MCF 10A (cell line): ENCODE measurements at regions of chr1 and their contacts with region 1.

Region 1: DNA sequence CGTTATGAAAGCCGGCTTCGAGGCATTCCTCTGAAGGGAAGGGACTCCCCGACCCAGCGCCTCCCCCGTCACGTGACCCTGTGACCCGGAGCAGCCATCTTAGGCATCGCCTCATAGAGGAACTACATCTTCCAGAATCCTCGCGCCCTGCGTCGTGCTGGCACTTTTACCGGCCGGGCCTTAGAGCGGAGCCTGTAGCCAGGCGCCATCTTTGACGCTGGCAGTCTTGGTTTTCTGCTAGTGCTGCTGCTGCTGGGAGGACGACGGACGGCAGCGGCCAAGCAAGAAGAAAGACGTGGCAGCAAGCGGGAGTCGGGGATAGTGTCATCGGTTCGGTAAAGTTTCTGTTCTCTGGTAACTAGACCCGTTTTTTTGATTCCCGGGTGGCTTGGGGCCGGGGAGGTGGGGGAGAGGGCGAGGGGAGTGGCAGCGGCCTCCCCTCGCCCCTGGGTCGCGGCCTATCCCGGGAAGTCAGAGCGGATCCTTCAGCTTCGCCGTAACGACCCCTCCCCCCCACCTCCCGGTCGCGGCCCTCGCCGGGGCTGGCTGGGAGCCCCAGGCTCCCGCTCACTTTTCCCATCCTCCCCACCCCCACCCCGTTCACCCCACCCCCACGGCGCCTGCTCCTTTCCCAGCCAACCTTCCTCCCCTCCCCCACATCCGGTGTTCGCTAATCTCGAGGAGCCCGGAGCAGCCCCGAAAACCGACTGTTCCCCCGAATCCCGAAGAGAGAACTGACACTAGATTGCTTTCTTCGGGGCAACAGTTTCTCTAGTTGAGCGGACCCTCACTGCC is at the starts of genes ZBED6 and ZC3H11A:
- DNase-seq: peak; percentile 100
- H3K4me3 Mint-ChIP-seq: peak within 1 kb of the TSS; percentile 86
- H3K27ac Mint-ChIP-seq: peak within 1 kb of the TSS; percentile 98
- H3K4me1 Mint-ChIP-seq: peaks cover 44% of the 10 kb centered on the region
- H3K27me3 Mint-ChIP-seq: no peaks in the 10 kb centered on the region
- CTCF ChIP-seq: no peak
- total RNA-seq, gene ZBED6: 68.2 and 69.8 TPM in 2 replicates
- total RNA-seq, gene ZC3H11A: 148 and 156 TPM in 2 replicates

Region 2: GRCh38 chr1:203663294-203663693 is 132.3 kb before region 1 on chr1:
- CTCF ChIA-PET with region 1: no interaction called
- POLR2A ChIA-PET with region 1: no interaction called
- intact Hi-C with region 1: loop called (anchors 1 kb)
- DNase-seq: peak; percentile 98
- H3K4me3 Mint-ChIP-seq: peak overlapping the region; percentile 3
- H3K27ac Mint-ChIP-seq: peak overlapping the region; percentile 58
- H3K4me1 Mint-ChIP-seq: peaks cover 34% of the 10 kb centered on the region
- H3K27me3 Mint-ChIP-seq: no peaks in the 10 kb centered on the region
- CTCF ChIP-seq: no peak

Region 3: DNA sequence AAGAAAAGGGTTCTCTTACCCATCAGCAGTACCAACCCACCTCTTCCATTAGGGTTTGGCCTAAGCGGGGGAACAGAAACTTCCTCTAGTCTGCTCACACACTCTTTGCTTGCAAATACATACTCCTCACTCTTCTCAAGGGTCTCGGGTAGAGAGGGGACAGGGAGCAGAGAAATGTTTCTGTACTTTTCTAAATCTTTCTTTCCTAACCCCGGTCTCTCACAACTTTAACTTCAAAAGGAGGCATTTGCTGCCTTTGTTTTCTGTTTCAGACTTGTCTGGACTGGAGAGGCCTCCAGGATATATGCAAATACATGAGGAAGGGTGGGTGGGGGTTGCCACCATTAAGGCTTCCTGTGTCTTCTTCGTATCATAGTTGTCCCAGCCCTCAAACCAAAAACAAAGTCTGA is 41.2 kb before region 1 on chr1:
- CTCF ChIA-PET with region 1: interaction called, 5 read pairs
- POLR2A ChIA-PET with region 1: interaction called, 11 read pairs
- intact Hi-C with region 1: loop called (anchors 5 kb)
- DNase-seq: no peak
- H3K4me3 Mint-ChIP-seq: no peak overlapping the region
- H3K27ac Mint-ChIP-seq: peak overlapping the region; percentile 4
- H3K4me1 Mint-ChIP-seq: peaks cover 26% of the 10 kb centered on the region
- H3K27me3 Mint-ChIP-seq: no peaks in the 10 kb centered on the region
- CTCF ChIP-seq: no peak

Region 4: GRCh38 chr1:203769505-203770343 is 25.9 kb before region 1 on chr1:
- CTCF ChIA-PET with region 1: interaction called, 4 read pairs
- POLR2A ChIA-PET with region 1: interaction called, 32 read pairs
- intact Hi-C with region 1: loop called (anchors 1 kb)
- DNase-seq: peak; percentile 99
- H3K4me3 Mint-ChIP-seq: peak overlapping the region; percentile 63
- H3K27ac Mint-ChIP-seq: peak overlapping the region; percentile 88
- H3K4me1 Mint-ChIP-seq: peaks cover 32% of the 10 kb centered on the region
- H3K27me3 Mint-ChIP-seq: no peaks in the 10 kb centered on the region
- CTCF ChIP-seq: no peak

Region 5: GRCh38 chr1:203781953-203782352 is 13.7 kb before region 1 on chr1:
- CTCF ChIA-PET with region 1: interaction called, 15 read pairs
- POLR2A ChIA-PET with region 1: interaction called, 9 read pairs
- intact Hi-C with region 1: no loop called
- DNase-seq: no peak
- H3K4me3 Mint-ChIP-seq: no peak overlapping the region
- H3K27ac Mint-ChIP-seq: no peak overlapping the region
- H3K4me1 Mint-ChIP-seq: no peaks in the 10 kb centered on the region
- H3K27me3 Mint-ChIP-seq: no peaks in the 10 kb centered on the region
- CTCF ChIP-seq: no peak

Region 6: DNA sequence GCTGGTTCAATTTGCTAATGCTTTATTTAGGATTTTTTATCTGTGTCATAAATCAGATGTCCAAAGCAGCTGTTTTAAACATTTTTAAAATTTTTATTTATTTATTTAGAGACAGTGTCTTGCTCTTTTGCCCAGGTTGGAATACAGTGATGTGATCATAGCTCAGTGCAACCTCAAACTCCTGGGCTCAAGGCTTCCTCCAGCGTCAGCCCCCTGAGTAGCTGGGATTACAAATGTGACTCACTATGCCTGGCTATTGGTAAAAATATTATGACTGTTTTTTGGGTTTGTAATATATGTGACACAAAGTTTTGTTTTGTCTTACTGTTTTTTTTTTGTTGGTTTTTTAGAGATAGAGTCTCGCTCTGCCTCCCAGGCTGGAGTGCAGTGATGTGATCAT is 11.6 kb after region 1 on chr1:
- CTCF ChIA-PET with region 1: interaction called, 10 read pairs
- POLR2A ChIA-PET with region 1: interaction called, 8 read pairs
- intact Hi-C with region 1: no loop called
- DNase-seq: no peak
- H3K4me3 Mint-ChIP-seq: no peak overlapping the region
- H3K27ac Mint-ChIP-seq: peak overlapping the region; percentile 75
- H3K4me1 Mint-ChIP-seq: peaks cover 16% of the 10 kb centered on the region
- H3K27me3 Mint-ChIP-seq: no peaks in the 10 kb centered on the region
- CTCF ChIP-seq: no peak

Region 7: DNA sequence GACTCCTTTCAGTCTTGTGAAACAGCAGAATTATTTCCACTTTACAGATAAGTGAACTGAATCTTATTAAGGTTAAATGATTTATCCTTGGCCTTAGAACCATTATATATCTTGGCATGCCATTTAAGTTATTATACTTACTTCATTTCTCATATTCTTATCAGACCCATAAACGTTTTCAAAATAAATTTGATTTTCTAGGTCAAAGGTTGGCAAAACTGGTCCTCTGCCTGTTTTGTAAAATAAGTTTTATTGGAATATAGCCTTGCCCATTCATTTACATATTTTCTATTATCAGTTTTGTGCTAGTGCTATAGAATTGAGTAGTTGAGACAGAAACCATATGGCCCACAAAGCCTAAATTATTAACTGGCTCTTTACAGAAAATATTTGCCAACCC is 32.9 kb after region 1 on chr1:
- CTCF ChIA-PET with region 1: no interaction called
- POLR2A ChIA-PET with region 1: interaction called, 12 read pairs
- intact Hi-C with region 1: no loop called
- DNase-seq: no peak
- H3K4me3 Mint-ChIP-seq: no peak overlapping the region
- H3K27ac Mint-ChIP-seq: no peak overlapping the region
- H3K4me1 Mint-ChIP-seq: no peaks in the 10 kb centered on the region
- H3K27me3 Mint-ChIP-seq: no peaks in the 10 kb centered on the region
- CTCF ChIP-seq: no peak